AG04450 (cell line): ENCODE measurements at regions of chr10 and their contacts with region 1.

Region 1: GRCh38 chr10:93376372-93377293 is 105.5 kb downstream of the MYOF start:
- DNase-seq: peak; percentile 74
- H3K4me3 ChIP-seq: peak overlapping the region; percentile 12; the same call in 1 of the 2 replicates
- H3K27ac ChIP-seq: peak overlapping the region; percentile 77
- H3K27me3 ChIP-seq: no peaks in the 10 kb centered on the region
- CTCF ChIP-seq: peak; percentile 96

Region 2: DNA sequence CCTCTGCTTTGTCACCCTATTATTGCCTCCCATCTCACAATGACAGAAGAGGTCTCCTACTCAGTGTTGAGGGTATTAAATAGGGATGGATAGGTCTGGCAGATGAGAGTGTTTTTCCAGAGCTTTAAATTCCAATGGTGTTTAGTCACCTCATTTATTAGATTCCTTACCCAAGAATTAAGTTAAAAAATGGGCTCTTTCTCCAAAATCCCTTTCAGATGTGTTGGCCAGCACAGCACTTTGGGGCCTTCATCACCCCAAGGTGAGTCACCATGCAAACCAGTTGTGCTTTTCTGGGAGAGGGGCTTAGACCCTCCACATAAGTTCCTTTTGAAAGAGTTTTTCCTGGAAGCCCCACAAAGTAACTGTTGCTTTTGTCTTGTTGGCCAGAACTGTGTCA is 224.5 kb before region 1 on chr10:
- CTCF ChIA-PET with region 1: no interaction called
- POLR2A ChIA-PET with region 1: no interaction called
- DNase-seq: no peak
- H3K4me3 ChIP-seq: no peak overlapping the region
- H3K27ac ChIP-seq: no peak overlapping the region
- H3K27me3 ChIP-seq: peaks cover 11% of the 10 kb centered on the region
- CTCF ChIP-seq: no peak

Region 3: DNA sequence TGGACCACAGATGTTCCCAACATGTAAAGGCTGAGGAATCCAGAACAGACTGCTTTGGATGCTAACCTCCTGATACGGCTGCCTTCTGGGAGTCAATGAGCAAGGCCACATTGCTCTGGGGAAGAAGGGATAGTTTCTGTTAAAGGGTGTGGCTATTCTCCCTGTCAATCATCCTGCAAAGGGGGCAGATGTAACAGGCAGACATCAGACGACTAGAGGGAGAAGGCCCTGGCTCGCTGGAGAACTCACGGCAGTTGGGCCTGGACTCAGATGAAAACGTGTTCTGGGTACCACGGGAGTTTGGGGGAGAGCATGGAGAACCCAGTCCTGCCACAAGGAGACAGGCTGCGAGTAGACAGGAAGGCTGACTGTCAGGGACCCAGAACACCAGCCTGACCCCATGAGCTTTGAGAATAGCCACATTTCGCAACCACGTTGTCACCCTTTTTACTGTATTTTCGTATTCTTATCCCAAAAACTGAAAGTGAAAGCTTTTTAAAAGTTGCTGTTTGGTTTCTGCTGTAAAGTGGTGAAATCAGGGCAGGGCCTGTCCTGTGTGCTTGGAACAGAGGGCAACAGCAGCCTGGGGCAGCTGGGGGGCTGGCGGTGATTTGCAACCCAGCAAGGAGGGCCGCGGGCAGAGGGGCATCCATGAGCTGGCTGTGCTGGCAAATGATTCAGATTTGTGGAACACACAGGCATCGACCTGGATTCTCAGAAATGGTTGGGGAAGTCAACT is 10.2 kb after region 1 on chr10:
- CTCF ChIA-PET with region 1: interaction called, 26 read pairs
- POLR2A ChIA-PET with region 1: no interaction called
- DNase-seq: no peak
- H3K4me3 ChIP-seq: no peak overlapping the region
- H3K27ac ChIP-seq: peak overlapping the region; percentile 47
- H3K27me3 ChIP-seq: no peaks in the 10 kb centered on the region
- CTCF ChIP-seq: no peak

Region 4: GRCh38 chr10:93420091-93420490 is 43.5 kb after region 1 on chr10:
- CTCF ChIA-PET with region 1: interaction called, 11 read pairs
- POLR2A ChIA-PET with region 1: no interaction called
- DNase-seq: no peak
- H3K4me3 ChIP-seq: no peak overlapping the region
- H3K27ac ChIP-seq: no peak overlapping the region
- H3K27me3 ChIP-seq: no peaks in the 10 kb centered on the region
- CTCF ChIP-seq: no peak

Region 5: GRCh38 chr10:93463678-93464476 is 87.2 kb after region 1 on chr10:
- CTCF ChIA-PET with region 1: interaction called, 17 read pairs
- POLR2A ChIA-PET with region 1: interaction called, 3 read pairs
- DNase-seq: no peak
- H3K4me3 ChIP-seq: no peak overlapping the region
- H3K27ac ChIP-seq: peak overlapping the region; percentile 97
- H3K27me3 ChIP-seq: no peaks in the 10 kb centered on the region
- CTCF ChIP-seq: no peak

Region 6: DNA sequence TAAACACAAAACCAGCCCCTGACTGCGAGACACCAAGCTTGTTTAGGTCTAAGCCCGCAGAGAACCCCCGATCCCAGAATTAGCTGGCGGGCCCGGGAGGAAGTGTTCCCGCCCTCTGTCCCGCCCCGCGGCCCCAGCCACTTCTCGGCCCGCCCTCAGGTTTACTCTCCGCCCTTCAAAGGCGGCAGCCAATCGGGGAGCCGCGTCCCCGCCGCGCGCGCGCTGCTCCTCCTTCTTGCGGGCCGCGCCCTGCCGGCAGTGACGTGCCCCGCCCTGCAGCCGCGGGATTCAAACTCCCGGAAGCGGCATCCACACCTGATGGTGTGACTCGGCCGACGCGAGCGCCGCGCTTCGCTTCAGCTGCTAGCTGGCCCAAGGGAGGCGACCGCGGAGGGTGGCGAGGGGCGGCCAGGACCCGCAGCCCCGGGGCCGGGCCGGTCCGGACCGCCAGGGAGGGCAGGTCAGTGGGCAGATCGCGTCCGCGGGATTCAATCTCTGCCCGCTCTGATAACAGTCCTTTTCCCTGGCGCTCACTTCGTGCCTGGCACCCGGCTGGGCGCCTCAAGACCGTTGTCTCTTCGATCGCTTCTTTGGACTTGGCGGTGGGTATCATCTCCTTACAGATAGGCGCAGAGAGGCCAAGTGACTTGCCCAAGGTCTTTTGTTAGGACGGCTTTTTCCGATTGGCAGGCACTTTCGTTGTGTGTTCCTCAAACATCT is 119.8 kb after region 1 on chr10 and contains the start of gene CEP55:
- CTCF ChIA-PET with region 1: interaction called, 473 read pairs
- POLR2A ChIA-PET with region 1: no interaction called
- DNase-seq: no peak
- H3K4me3 ChIP-seq: peak within 1 kb of the TSS; percentile 82
- H3K27ac ChIP-seq: peak within 1 kb of the TSS; percentile 39
- H3K27me3 ChIP-seq: no peaks in the 10 kb centered on the region
- CTCF ChIP-seq: no peak
- polyA plus RNA-seq, gene CEP55: 10.0 and 16.3 TPM in 2 replicates